GM10248 (cell line): ENCODE measurements at regions of chr5 and their contacts with region 1.

Region 1: GRCh38 chr5:149618581-149619251 is 37.4 kb downstream of the ARHGEF37 start:
- DNase-seq: peak; percentile 70
- CTCF ChIP-seq: peak; percentile 61

Region 2: GRCh38 chr5:149434162-149435014 is 184.3 kb before region 1 on chr5:
- CTCF ChIA-PET with region 1: interaction called, 38 read pairs
- POLR2A ChIA-PET with region 1: no interaction called
- DNase-seq: peak; percentile 74
- CTCF ChIP-seq: peak; percentile 53

Region 3: DNA sequence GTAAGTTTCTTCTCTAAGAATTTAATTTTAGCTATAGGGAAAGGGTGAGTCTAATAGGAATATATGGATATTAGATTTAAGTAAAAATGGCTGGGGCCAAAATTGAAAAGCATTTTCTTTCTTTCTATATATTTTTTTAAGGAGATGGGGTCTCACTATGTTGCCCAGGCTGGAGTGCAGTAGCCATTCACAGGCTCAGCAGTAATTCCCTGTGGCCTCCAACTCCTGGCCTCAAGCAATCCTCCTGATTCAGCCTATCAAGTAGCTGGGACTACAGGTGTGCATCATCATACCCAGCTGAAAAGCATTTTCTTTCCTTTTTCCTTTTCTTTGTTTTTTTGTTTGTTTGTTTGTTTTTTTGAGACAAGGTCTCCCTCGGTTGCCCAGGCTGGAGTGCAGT is 108.6 kb before region 1 on chr5:
- CTCF ChIA-PET with region 1: no interaction called
- POLR2A ChIA-PET with region 1: no interaction called
- DNase-seq: no peak
- CTCF ChIP-seq: no peak

Region 4: GRCh38 chr5:149551200-149552037 is 67.3 kb before region 1 on chr5 and contains the start of gene CSNK1A1:
- CTCF ChIA-PET with region 1: interaction called, 14 read pairs
- POLR2A ChIA-PET with region 1: no interaction called
- DNase-seq: peak; percentile 100
- CTCF ChIP-seq: peak; percentile 69

Region 5: DNA sequence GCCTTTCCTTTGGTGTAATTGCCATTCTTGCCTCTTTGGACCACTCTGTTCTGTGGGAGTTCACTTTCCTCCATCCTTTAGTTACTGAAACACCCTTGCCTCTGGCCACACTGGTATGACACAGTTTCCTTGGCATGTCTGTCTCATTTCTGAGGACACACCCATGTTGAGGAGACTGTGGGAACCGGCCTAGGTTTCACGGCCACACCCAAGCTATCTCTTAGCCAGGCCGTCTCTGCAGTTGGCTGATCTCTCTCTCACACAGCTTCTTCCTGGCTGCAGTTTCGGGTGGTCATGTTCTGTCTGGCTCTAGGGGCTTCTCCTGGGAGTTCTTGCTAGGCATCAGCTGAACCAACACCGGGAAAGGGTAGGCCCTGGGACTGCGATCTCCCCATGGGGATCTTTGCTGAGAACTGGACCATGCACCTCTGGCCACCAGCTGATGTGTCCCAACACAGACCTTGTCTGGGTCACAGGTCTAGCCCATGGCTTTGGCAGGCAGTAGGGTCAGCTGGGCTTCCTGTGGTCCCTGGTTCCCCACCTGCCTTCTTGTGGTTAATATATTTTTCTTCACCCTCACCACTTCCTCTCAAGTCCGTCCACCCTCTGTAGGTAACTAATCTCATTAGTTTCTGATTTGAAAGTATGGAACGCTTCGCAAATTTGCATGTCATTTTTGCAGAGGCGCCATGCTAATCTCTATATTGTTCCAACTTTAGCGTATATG is 12.6 kb before region 1 on chr5:
- CTCF ChIA-PET with region 1: interaction called, 50 read pairs
- POLR2A ChIA-PET with region 1: no interaction called
- DNase-seq: peak; percentile 53
- CTCF ChIP-seq: no peak

Region 6: DNA sequence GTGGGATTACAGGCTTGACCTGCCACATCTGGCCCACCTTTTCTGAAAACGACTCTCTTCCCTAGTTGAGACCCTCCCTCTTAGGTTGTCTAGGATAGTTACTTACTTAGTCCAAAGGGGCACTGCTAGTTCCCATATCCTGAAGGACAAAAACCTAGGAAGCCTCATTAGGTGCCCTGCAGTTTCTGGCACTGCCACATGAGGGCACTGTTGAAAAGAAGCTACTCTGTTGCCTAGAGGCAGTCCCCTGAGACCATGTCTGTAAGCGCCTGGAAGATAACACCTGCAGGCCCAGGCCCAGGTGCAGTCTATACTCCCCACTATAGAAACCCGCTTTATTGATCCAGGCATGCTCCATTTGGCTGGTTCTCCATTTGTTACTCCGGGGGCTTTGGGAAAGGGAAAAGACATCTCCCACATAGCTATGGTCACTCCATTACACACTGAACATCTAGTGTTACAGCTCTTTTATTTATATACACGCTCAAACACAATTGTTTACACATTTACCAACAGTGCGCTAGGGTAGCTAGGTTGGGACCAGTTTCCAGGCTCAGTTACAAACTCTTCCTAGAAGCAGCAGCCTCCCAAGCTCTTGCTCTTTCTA is 38.0 kb after region 1 on chr5:
- CTCF ChIA-PET with region 1: interaction called, 11 read pairs
- POLR2A ChIA-PET with region 1: no interaction called
- DNase-seq: peak; percentile 58
- CTCF ChIP-seq: peak; percentile 52

Region 7: GRCh38 chr5:150112261-150113046 is 493.7 kb after region 1 on chr5:
- CTCF ChIA-PET with region 1: no interaction called
- POLR2A ChIA-PET with region 1: no interaction called
- DNase-seq: no peak
- CTCF ChIP-seq: no peak